Naive thymus-derived CD4-positive, alpha-beta T cell (primary cell): ENCODE measurements at regions of chr1 and their contacts with region 1.

Region 1: GRCh38 chr1:156065212-156065611 is 4.3 kb downstream of the RAB25 start:
- DNase-seq: no peak
- ATAC-seq: no peak
- H3K4me3 ChIP-seq: no peak overlapping the region
- H3K4me3 Mint-ChIP-seq: no peak overlapping the region
- H3K27ac ChIP-seq: no peak overlapping the region
- H3K27ac Mint-ChIP-seq: no peak overlapping the region
- H3K4me1 ChIP-seq: no peaks in the 10 kb centered on the region
- H3K4me1 Mint-ChIP-seq: peaks cover 0 to 16% (median 5%) of the 10 kb centered on the region in 7 donors
- H3K27me3 ChIP-seq: no peaks in the 10 kb centered on the region
- H3K27me3 Mint-ChIP-seq: peaks cover 0 to 3% (median 0%) of the 10 kb centered on the region in 5 donors

Region 2: DNA sequence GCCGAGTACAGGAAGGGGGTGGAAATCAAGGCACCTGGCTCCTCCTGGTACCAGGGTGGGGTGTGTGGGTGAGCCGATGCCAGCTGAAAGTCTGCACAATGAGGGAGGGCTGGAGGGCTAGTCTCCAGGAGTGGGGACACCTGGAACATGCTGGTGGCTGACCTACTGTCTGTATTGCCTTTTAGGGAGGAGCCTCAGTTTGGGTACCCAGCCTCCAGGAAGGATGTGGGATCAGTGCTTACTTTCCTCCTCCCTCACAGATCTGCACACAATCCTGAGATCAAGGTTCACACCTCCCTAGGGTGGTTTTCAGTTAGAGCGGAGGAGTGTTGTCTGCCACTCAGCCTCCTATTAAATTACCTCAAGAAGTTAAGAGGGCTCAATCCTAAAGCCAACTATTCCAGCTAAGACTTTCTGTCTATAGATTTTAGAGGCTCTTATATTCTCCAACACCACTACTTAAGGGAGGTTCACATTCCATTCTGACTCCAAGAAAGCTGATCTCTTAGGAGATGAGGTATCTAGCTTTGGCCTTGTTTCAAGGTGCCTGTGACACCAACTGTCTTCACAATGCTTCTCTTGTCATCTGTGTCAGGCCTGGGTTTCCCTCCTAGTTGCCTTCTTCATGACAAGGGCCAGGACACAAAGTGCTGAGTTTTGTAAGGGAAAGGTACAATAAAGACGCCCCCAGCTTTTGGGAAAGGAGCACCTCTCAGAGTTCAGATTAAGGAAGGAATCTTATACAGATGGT is 60.2 kb before region 1 on chr1:
- CTCF ChIA-PET with region 1: no interaction called
- POLR2A ChIA-PET with region 1: no interaction called
- intact Hi-C with region 1: loop called in 1 of 2 experiments (anchors 5 kb)
- DNase-seq: peak in 6 of 9 donors; percentile 13 to 35 (median 19)
- ATAC-seq: peak; percentile 83
- H3K4me3 ChIP-seq: peak overlapping the region; percentile 43
- H3K4me3 Mint-ChIP-seq: peak overlapping the region; percentile 16 to 66 (median 43)
- H3K27ac ChIP-seq: peak overlapping the region; percentile 48
- H3K27ac Mint-ChIP-seq: peak overlapping the region; percentile 42 to 92 (median 85)
- H3K4me1 ChIP-seq: peaks cover 14 to 15% of the 10 kb centered on the region in 2 donors
- H3K4me1 Mint-ChIP-seq: peaks cover 11 to 41% (median 18%) of the 10 kb centered on the region in 7 donors
- H3K27me3 ChIP-seq: no peaks in the 10 kb centered on the region
- H3K27me3 Mint-ChIP-seq: peaks cover 0 to 2% (median 0%) of the 10 kb centered on the region in 5 donors

Region 3: GRCh38 chr1:156033011-156033410 is 32.2 kb before region 1 on chr1:
- CTCF ChIA-PET with region 1: no interaction called
- POLR2A ChIA-PET with region 1: no interaction called
- intact Hi-C with region 1: no loop called
- DNase-seq: no peak
- ATAC-seq: no peak
- H3K4me3 ChIP-seq: no peak overlapping the region
- H3K4me3 Mint-ChIP-seq: no peak overlapping the region
- H3K27ac ChIP-seq: no peak overlapping the region
- H3K27ac Mint-ChIP-seq: peak overlapping the region in 1 of 9 donors; percentile 34
- H3K4me1 ChIP-seq: no peaks in the 10 kb centered on the region
- H3K4me1 Mint-ChIP-seq: peaks cover 0 to 4% (median 0%) of the 10 kb centered on the region in 7 donors
- H3K27me3 ChIP-seq: no peaks in the 10 kb centered on the region
- H3K27me3 Mint-ChIP-seq: no peaks in the 10 kb centered on the region